Sigmoid colon (tissue), 7 donors: ENCODE measurements at regions of chr16 and their contacts with region 1.

Region 1: DNA sequence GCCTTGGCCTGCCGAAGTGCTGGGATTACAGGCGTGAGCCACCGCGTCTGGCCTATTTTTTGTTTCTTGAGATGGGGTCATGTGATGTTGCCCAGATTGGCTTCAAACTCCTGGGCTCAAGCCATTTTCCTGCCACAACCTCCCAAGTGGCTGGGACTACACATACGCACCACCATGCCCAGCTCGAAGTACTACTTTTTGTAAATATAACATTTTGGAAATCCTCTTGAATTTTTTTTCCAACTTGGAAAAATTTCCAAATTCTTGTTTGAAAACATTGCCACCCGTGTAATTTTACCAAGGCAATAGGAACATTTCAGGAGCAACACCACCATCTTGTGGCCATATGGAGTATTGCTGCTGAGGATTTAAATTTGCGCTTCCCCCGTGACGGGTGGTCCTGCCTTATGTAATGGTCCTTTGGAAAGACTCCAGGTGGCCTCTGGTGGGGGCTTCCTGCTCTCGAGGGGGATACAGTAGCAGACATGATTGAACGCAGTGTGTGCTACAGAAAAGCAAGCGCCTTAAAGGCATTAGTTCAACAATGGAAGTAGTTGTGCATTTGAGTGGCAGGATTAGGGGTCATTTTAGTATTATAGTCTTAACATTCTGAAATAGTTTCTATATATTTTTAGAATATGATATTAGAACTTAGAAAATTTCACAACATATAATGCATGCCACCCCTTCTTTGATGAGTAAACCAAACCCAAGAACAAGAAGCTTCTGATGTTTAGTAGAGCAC is 8.0 kb downstream of the FLYWCH1 start:
- DNase-seq: peak; percentile 83
- H3K4me3 ChIP-seq: no peak overlapping the region
- H3K27ac ChIP-seq: peak overlapping the region; percentile 67 to 79 (median 72)
- H3K4me1 ChIP-seq: peaks cover 0 to 10% (median 7%) of the 10 kb centered on the region in 4 donors
- H3K27me3 ChIP-seq: no peaks in the 10 kb centered on the region
- CTCF ChIP-seq: peak; percentile 93 to 98 (median 96)
- EP300 ChIP-seq: no peak
- POLR2A ChIP-seq: no peak

Region 2: GRCh38 chr16:2739625-2740435 is 179.9 kb before region 1 on chr16:
- intact Hi-C with region 1: no loop called
- DNase-seq: no peak
- H3K4me3 ChIP-seq: no peak overlapping the region
- H3K27ac ChIP-seq: no peak overlapping the region
- H3K4me1 ChIP-seq: no peaks in the 10 kb centered on the region
- H3K27me3 ChIP-seq: peaks cover 0 to 30% (median 27%) of the 10 kb centered on the region in 3 donors
- CTCF ChIP-seq: no peak
- EP300 ChIP-seq: no peak
- POLR2A ChIP-seq: no peak

Region 3: DNA sequence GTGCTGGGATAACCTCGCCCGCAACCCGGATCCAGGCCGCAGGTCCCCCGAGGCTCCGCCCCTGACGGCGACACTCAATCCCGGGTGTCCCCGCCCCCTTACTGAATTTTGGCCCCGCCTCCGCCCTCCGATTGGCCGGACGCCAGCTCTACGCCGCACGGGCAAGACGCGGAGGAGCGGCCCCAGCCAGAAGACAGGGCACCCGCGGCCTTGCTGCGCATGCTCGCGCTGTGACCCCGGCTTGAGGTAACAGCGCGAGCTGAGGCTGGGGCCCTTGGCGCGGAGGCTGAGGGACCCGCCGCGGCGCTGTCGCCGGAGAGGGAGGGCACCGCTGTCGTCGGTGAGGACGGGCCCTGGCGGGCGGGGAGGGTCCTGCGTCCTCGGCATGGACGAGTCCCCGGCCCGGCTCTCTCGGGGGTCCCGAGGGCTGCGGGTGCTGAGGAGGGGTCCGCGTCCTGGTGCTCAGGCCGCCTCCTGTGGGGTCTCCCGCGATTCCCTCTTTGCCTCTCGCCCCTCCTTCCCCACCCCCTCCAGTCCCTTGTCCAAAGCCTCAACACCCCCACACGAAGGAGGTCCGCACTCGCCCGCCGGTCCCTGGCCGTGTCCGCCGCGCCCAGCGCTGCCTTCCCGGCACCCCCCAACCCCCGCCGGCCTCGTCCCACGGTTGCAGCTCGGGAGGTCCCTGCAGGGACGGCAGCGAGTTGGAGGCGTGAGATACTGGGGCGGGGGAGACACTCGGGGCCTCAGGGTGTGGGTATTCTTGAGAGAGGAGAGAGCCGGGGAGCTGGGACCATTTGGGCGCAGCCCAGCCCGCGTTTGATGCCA is 36.4 kb before region 1 on chr16 and contains the start of gene FLYWCH2:
- intact Hi-C with region 1: loop called (anchors 5 kb)
- DNase-seq: peak; percentile 99
- H3K4me3 ChIP-seq: peak within 1 kb of the TSS; percentile 67 to 99 (median 80)
- H3K27ac ChIP-seq: peak within 1 kb of the TSS; percentile 94 to 100 (median 98)
- H3K4me1 ChIP-seq: peaks cover 0 to 16% (median 10%) of the 10 kb centered on the region in 4 donors
- H3K27me3 ChIP-seq: no peaks in the 10 kb centered on the region
- CTCF ChIP-seq: peak in 1 of 4 experiments; percentile 13
- EP300 ChIP-seq: no peak
- POLR2A ChIP-seq: peak; percentile 14 to 59
- total RNA-seq, gene FLYWCH2: 33.6 to 64.2 (median 55.8) TPM

Region 4: DNA sequence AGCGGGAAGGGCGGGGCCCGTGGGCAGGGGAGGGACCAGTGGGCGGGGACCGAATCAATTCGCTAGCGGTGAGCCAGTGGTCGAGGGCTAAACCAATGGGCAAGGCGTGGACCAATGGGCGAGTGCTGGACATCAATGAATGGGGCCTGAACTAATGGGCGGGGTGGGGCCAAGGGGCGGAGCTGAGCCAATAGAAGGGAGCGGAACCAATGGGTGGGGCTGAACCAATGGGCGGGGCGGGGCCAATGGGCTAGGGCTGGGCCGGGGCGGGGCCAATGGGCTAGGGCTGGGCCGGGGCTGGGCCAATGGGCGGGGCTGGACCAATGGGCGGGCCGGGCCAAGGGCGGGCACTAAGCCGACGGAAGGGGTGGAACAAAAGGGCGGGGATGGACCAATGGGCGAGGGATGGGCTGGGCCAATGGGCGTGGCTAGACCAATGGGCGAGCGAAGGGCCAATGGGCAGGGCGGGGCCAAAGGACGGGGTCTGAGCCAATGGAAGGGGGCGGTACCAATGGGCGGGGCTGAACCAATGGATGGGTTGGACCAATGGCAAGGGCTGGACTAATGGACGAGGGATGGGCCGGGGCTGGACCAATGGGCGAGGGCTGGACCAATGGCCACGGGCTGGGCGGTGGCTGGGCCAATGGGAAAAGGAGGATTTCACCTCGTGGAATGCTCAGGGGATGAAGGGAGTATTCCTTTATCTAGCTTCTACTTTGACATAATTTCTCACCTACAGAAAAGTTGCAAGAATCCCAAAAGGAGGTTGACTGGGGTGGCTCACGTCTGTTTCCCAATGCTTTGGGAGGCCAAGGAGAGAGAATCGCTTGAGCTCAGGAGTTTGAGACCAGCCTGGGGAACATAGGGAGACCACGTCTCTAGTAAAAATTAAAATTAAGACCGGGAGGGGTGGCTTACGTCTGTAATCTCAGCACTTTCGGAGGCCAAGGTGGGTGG is 14.0 kb before region 1 on chr16:
- intact Hi-C with region 1: loop called (anchors 1 kb)
- DNase-seq: peak; percentile 100
- H3K4me3 ChIP-seq: peak overlapping the region; percentile 50 to 77 (median 70)
- H3K27ac ChIP-seq: peak overlapping the region; percentile 90 to 96 (median 92)
- H3K4me1 ChIP-seq: peaks cover 0 to 21% (median 17%) of the 10 kb centered on the region in 4 donors
- H3K27me3 ChIP-seq: no peaks in the 10 kb centered on the region
- CTCF ChIP-seq: no peak
- EP300 ChIP-seq: no peak
- POLR2A ChIP-seq: no peak